T-cell (primary cell): ENCODE measurements at regions of chr9 and their contacts with region 1.

Region 1: GRCh38 chr9:19184144-19184917 is 46.2 kb upstream of the DENND4C start:
- DNase-seq: peak; percentile 51 to 87 (median 73)
- ATAC-seq: peak; percentile 99 to 100 (median 100)
- H3K4me3 ChIP-seq: no peak overlapping the region
- H3K4me3 Mint-ChIP-seq: peak overlapping the region; percentile 15 to 64 (median 31)
- H3K27ac ChIP-seq: peak overlapping the region; percentile 93
- H3K27ac Mint-ChIP-seq: peak overlapping the region; percentile 97 to 98
- H3K4me1 ChIP-seq: peaks cover 0 to 44% of the 10 kb centered on the region in 2 experiments
- H3K4me1 Mint-ChIP-seq: peaks cover 14 to 35% (median 29%) of the 10 kb centered on the region in 3 donors
- H3K27me3 ChIP-seq: no peaks in the 10 kb centered on the region
- H3K27me3 Mint-ChIP-seq: no peaks in the 10 kb centered on the region

Region 2: GRCh38 chr9:19161257-19162025 is 22.9 kb before region 1 on chr9:
- CTCF ChIA-PET with region 1: no interaction called
- POLR2A ChIA-PET with region 1: no interaction called
- DNase-seq: peak in 28 of 35 experiments; percentile 3 to 69 (median 26)
- ATAC-seq: peak; percentile 94 to 99 (median 98)
- H3K4me3 ChIP-seq: no peak overlapping the region
- H3K4me3 Mint-ChIP-seq: peak overlapping the region; percentile 25 to 53 (median 32)
- H3K27ac ChIP-seq: peak overlapping the region; percentile 85
- H3K27ac Mint-ChIP-seq: peak overlapping the region; percentile 91 to 95
- H3K4me1 ChIP-seq: peaks cover 12 to 16% of the 10 kb centered on the region in 2 experiments
- H3K4me1 Mint-ChIP-seq: peaks cover 14 to 24% (median 17%) of the 10 kb centered on the region in 3 donors
- H3K27me3 ChIP-seq: no peaks in the 10 kb centered on the region
- H3K27me3 Mint-ChIP-seq: no peaks in the 10 kb centered on the region

Region 3: DNA sequence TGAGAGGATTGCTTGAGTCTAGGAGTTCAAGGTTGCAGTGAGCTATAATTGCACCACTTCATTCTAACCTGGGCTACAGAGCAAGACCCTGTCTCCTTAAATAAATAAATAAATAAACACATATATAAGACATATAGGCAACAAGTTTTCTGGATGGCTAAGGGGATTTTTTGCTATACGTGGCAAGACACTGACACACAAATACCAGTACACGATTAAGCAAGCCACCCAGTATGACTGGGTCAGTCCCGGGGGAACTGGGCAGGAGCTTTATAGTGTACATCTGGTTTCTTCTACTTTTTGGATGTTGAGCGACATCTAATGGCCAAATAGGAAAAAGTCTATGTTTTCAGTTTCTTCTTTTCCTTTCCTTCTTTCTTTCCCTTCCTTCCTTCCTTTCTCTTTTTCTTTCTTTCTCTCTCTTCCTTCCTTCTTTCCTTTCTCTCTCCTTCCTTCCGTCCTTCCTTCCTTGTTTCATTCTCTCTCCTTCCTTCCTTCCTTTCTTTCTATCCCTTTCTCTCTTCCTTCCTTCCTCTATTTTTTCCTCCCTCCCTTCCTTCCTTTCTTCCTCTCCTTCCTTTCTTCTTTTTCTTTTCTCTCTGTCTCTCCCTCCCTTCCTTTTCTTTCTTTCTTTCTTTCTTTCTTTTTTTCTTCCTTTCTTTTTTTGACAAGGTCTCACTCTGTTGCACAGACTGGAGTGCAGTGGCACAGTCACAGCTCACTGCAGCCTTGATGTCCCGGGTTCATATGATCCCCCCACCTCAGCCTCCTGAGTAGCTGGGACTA is 10.0 kb before region 1 on chr9:
- CTCF ChIA-PET with region 1: interaction called, 3 to 10 read pairs
- POLR2A ChIA-PET with region 1: no interaction called
- DNase-seq: peak in 18 of 35 experiments; percentile 4 to 63 (median 13)
- ATAC-seq: peak in 3 of 4 experiments; percentile 61 to 77 (median 63)
- H3K4me3 ChIP-seq: no peak overlapping the region
- H3K4me3 Mint-ChIP-seq: no peak overlapping the region
- H3K27ac ChIP-seq: no peak overlapping the region
- H3K27ac Mint-ChIP-seq: no peak overlapping the region
- H3K4me1 ChIP-seq: peaks cover 15 to 20% of the 10 kb centered on the region in 2 experiments
- H3K4me1 Mint-ChIP-seq: peaks cover 27 to 38% (median 33%) of the 10 kb centered on the region in 3 donors
- H3K27me3 ChIP-seq: no peaks in the 10 kb centered on the region
- H3K27me3 Mint-ChIP-seq: no peaks in the 10 kb centered on the region